Calu3 (cell line): ENCODE measurements at regions of chr21 and their contacts with region 1.

Region 1: GRCh38 chr21:41593051-41593759 is 85.2 kb upstream of the TMPRSS2 start:
- DNase-seq: no peak
- H3K4me3 Mint-ChIP-seq: no peak overlapping the region
- H3K27ac Mint-ChIP-seq: no peak overlapping the region
- H3K4me1 Mint-ChIP-seq: peaks cover 21% of the 10 kb centered on the region
- H3K27me3 Mint-ChIP-seq: no peaks in the 10 kb centered on the region
- CTCF ChIP-seq: no peak

Region 2: DNA sequence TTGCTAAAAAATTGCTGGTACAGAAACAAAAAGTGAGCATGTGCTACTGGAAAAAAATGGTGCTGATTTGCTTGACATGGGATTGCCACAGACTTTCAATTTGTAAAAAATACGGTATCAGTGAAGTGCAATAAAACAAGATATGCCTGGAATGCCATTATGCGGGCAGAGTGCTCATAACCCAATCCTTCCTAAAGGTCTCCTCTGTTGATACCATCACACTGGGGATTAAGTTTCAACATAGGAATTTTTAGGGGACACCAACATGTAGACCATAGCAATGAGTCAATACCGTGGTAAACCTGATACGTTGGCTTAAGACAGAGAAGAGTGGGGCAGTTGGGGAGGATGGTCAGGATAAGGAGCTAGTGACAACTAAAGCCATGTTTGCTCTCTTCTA is 146.6 kb before region 1 on chr21:
- CTCF ChIA-PET with region 1: no interaction called
- intact Hi-C with region 1: no loop called
- DNase-seq: no peak
- H3K4me3 Mint-ChIP-seq: no peak overlapping the region
- H3K27ac Mint-ChIP-seq: no peak overlapping the region
- H3K4me1 Mint-ChIP-seq: no peaks in the 10 kb centered on the region
- H3K27me3 Mint-ChIP-seq: no peaks in the 10 kb centered on the region
- CTCF ChIP-seq: no peak

Region 3: DNA sequence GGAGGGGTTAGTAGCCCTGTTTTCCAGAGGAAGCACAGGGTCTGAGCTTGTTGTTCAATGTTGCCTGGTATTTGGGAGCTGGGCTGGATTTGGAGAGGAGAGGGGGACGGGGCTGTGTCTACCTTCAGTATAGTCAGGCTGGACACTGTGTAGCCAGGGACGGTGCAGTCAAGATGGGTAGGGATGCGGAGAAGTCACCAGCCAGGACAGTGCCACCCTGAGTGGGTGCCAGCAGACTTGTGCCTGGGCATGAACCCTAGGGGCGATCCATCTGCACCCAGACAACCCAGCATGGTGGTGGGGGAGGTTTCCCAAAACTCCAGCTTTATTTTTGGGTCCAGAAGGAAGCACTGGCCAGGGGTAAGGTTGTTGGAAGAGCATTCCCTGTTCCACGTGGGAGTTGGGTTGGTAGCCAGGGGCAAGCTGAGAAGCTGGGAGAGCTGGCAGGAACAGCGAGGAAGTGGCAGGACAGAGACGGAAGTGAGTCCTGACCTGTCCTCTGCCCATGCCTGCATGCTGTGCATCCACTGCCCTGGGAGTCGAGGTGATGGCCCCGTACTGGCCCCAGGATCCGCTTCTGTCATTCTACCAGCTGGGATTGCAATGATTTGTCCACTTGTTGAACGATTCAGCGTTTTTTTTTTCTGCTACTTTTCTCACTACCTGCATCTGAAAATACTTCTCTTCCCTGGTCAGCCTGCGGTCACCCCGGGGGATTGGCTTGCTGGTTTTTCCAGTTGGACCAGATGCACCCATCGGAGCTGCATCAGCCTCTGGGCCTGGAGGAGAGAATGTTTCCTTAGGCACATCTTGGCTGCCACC is 57.2 kb before region 1 on chr21:
- CTCF ChIA-PET with region 1: interaction called, 3 read pairs
- intact Hi-C with region 1: loop called (anchors 5 kb)
- DNase-seq: peak; percentile 85
- H3K4me3 Mint-ChIP-seq: peak overlapping the region; percentile 50
- H3K27ac Mint-ChIP-seq: peak overlapping the region; percentile 27
- H3K4me1 Mint-ChIP-seq: peaks cover 11% of the 10 kb centered on the region
- H3K27me3 Mint-ChIP-seq: no peaks in the 10 kb centered on the region
- CTCF ChIP-seq: no peak